Right lobe of liver (tissue), 6 donors: ENCODE measurements at regions of chr14 and their contacts with region 1.

Region 1: GRCh38 chr14:24160850-24161804 is at the start of gene IRF9:
- DNase-seq: peak; percentile 95 to 97 (median 96)
- ATAC-seq: peak; percentile 89 to 93 (median 92)
- H3K4me3 ChIP-seq: peak within 1 kb of the TSS; percentile 68 to 92 (median 81)
- H3K27ac ChIP-seq: peak within 1 kb of the TSS; percentile 81 to 98 (median 92)
- H3K4me1 ChIP-seq: peaks cover 0 to 35% (median 11%) of the 10 kb centered on the region in 4 donors
- H3K27me3 ChIP-seq: no peaks in the 10 kb centered on the region
- CTCF ChIP-seq: peak; percentile 92 to 99 (median 95)
- POLR2A ChIP-seq: peak; percentile 56
- total RNA-seq, gene IRF9: 17.4 to 66.6 (median 37.2) TPM

Region 2: DNA sequence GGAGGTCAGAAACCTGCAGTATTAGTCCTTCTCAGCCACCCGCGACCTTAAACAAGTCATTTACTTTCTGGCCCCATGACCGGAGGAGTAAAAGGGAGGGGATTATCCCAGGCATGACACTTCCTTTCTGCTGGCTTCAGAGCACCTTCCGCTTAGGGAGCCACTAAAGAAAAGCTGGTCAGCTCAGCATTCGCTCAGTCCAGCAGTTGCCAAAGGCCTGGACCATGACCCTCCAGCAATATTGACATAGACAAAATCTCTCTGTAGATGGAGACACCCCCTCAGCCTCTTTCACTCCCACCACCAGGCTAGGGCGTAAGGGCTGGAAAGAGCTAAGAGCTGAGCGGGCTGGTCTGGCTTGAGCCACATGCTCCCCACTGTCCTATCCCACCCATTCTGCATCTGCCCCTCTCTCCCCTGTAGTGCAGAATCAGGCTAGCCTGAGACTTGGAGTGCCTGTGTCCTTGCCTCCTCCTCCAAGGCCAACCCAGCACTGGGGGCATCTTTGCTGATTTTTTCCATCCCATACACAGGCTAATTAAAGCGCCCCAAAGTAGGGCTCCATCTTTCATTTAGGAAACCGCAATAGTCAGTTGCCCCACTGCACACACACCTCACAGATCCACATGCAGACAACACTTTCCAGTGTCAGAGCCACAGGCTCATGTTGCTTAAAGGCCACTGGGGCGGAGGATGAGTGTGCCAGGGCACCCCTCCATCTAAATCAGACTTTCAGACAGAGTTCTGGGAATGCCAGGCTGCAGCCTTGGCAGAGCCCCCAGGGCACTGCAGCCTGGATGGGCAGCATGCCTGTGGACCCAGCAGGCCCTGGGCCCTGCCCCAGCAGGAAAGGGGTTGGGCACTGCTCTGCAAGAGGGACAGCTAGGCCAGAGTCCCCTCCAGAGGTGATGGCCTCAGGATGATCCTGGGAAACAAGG is 93.7 kb before region 1 on chr14:
- intact Hi-C with region 1: loop called in 1 of 2 experiments (anchors 10 kb)
- DNase-seq: peak in 2 of 3 donors; percentile 86 to 91
- ATAC-seq: peak; percentile 77 to 83 (median 82)
- H3K4me3 ChIP-seq: peak overlapping the region in 2 of 3 donors; percentile 60 to 64
- H3K27ac ChIP-seq: peak overlapping the region; percentile 8 to 87 (median 85)
- H3K4me1 ChIP-seq: peaks cover 0 to 57% (median 17%) of the 10 kb centered on the region in 4 donors
- H3K27me3 ChIP-seq: no peaks in the 10 kb centered on the region
- CTCF ChIP-seq: no peak
- POLR2A ChIP-seq: peak; percentile 27

Region 3: GRCh38 chr14:24093901-24094761 is 67.0 kb before region 1 on chr14 and contains the start of gene PCK2:
- intact Hi-C with region 1: loop called in 1 of 2 experiments (anchors 10 kb)
- DNase-seq: peak; percentile 98 to 99 (median 99)
- ATAC-seq: peak; percentile 83 to 93 (median 86)
- H3K4me3 ChIP-seq: peak within 1 kb of the TSS; percentile 77 to 98 (median 90)
- H3K27ac ChIP-seq: peak within 1 kb of the TSS; percentile 89 to 97 (median 94)
- H3K4me1 ChIP-seq: peaks cover 0 to 57% (median 26%) of the 10 kb centered on the region in 4 donors
- H3K27me3 ChIP-seq: no peaks in the 10 kb centered on the region
- CTCF ChIP-seq: no peak
- POLR2A ChIP-seq: peak; percentile 97
- total RNA-seq, gene PCK2: 124 to 615 (median 240) TPM